ENCODE measurements at regions of chr1 and their contacts with region 1.

Region 1: DNA sequence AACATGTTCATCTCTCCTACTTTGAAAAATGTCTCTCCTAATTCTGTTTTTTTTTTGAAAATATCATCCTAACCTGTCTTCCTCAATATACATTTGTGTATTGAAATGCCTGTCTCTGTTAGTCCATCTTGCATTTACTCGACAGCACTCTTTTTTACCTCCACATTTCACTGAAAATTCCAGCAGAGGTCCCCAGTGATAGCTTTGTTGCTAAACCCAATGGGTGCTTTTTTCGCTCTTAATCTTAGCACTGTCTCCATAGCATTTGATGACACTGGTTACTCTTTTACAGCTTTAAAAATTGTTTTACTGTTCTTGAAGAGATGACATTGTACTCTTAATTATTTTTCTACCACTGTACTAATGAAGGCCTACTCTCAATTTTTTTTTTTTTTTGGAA is 10.8 kb downstream of the OSBPL9 start:
- DNase-seq: no peak
- ATAC-seq: peak in 1 of 2 donors; percentile 31
- H3K4me3 ChIP-seq: no peak overlapping the region
- H3K27ac ChIP-seq: no peak overlapping the region
- H3K4me1 ChIP-seq: peaks cover 6% of the 10 kb centered on the region
- H3K27me3 ChIP-seq: no peaks in the 10 kb centered on the region

Region 2: GRCh38 chr1:51679435-51679834 is 51.8 kb after region 1 on chr1:
- intact Hi-C with region 1: no loop called
- DNase-seq: no peak
- ATAC-seq: peak in 1 of 2 donors; percentile 41
- H3K4me3 ChIP-seq: no peak overlapping the region
- H3K27ac ChIP-seq: no peak overlapping the region
- H3K4me1 ChIP-seq: no peaks in the 10 kb centered on the region
- H3K27me3 ChIP-seq: no peaks in the 10 kb centered on the region

Region 3: DNA sequence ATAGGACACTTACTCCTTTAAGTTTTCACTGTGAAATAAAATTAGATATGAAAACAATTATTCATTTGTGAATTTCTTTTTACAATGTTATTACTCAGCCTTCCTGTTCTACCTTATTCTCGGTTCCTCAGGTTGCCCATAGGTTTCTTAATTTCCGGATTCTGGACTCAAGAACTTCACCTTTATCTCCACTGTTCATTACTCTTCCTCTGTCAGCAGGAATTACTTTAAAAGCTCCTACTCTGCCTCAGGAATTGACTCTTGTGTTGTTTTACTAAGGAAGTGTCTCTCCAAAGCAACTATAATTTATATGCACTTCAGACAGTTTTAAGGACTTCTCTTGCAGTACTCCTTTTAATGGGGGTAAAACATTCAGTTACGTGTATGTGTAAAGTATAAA is 113.0 kb after region 1 on chr1:
- intact Hi-C with region 1: loop called in 1 of 4 experiments (anchors 10 kb)
- DNase-seq: no peak
- ATAC-seq: no peak
- H3K4me3 ChIP-seq: no peak overlapping the region
- H3K27ac ChIP-seq: no peak overlapping the region
- H3K4me1 ChIP-seq: peaks cover 1% of the 10 kb centered on the region
- H3K27me3 ChIP-seq: no peaks in the 10 kb centered on the region

Measured in right cardiac atrium (tissue), 5 donors.